ENCODE measurements at regions of chr12 and their contacts with region 1.

Region 1: DNA sequence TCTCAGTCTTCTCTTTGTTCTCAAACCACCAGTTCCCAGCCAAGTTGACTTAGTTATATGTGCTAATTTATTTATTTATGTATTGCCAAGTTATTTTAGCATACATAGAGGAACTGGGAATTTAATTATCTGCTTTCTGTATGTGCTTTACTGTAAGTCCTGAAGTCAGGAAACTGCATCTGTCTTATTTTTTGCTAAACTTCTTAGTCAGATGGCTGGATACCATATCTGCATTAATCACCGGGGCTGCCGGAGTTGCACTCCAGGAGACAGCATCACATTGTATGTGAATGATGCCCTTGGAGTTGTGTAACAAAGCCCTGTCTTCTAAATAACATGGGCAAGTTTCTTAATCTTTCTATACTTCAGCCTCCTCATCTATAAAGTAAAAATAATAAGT is 96.2 kb downstream of the MON2 start:
- DNase-seq: no peak
- H3K4me3 ChIP-seq: no peak overlapping the region
- H3K27ac ChIP-seq: no peak overlapping the region
- H3K4me1 ChIP-seq: no peaks in the 10 kb centered on the region
- H3K27me3 ChIP-seq: no peaks in the 10 kb centered on the region
- CTCF ChIP-seq: no peak

Region 2: GRCh38 chr12:62588916-62589315 is 26.1 kb after region 1 on chr12:
- CTCF ChIA-PET with region 1: no interaction called
- POLR2A ChIA-PET with region 1: interaction called, 19 read pairs
- intact Hi-C with region 1: no loop called
- DNase-seq: no peak
- H3K4me3 ChIP-seq: no peak overlapping the region
- H3K27ac ChIP-seq: no peak overlapping the region
- H3K4me1 ChIP-seq: no peaks in the 10 kb centered on the region
- H3K27me3 ChIP-seq: no peaks in the 10 kb centered on the region
- CTCF ChIP-seq: no peak